Body of pancreas (tissue), 4 donors: ENCODE measurements at regions of chr22 and their contacts with region 1.

Region 1: GRCh38 chr22:25362215-25362882 is 142.9 kb downstream of the CRYBB2 start:
- DNase-seq: peak; percentile 59 to 72 (median 64)
- ATAC-seq: peak; percentile 54
- H3K4me3 ChIP-seq: no peak overlapping the region
- H3K27ac ChIP-seq: no peak overlapping the region
- H3K4me1 ChIP-seq: peaks cover 6% of the 10 kb centered on the region
- H3K27me3 ChIP-seq: no peaks in the 10 kb centered on the region
- CTCF ChIP-seq: peak; percentile 63 to 95 (median 72)
- POLR2A ChIP-seq: no peak

Region 2: DNA sequence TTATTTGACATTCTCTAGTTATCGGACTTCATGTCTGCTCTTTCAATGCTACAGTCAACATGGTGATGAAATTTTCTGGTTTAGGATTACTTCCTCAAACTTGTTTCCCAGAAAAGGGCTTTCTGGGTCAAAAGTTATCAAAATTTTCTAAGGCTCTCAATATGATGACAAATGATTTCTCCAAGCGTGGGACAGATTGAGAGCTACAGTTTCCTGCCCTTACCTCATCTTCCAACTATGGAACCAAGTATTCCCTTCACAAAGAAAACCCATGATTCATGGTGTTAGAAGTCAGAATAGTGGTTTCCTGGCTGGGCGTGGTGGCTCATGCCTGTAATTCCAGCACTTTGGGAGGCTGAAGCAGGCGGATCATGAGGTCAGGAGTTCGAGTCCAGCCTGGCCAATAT is 397.5 kb after region 1 on chr22:
- intact Hi-C with region 1: loop called (anchors 10 kb)
- DNase-seq: peak; percentile 30 to 57 (median 36)
- ATAC-seq: peak; percentile 91
- H3K4me3 ChIP-seq: no peak overlapping the region
- H3K27ac ChIP-seq: peak overlapping the region in 2 of 4 donors; percentile 46 to 66
- H3K4me1 ChIP-seq: no peaks in the 10 kb centered on the region
- H3K27me3 ChIP-seq: no peaks in the 10 kb centered on the region
- CTCF ChIP-seq: no peak
- POLR2A ChIP-seq: no peak